ENCODE measurements at regions of chr9 and their contacts with region 1.

Region 1: GRCh38 chr9:17994700-17995430 is 416.0 kb downstream of the SH3GL2 start:
- DNase-seq: no peak
- ATAC-seq: no peak
- H3K4me3 ChIP-seq: no peak overlapping the region
- H3K27ac ChIP-seq: no peak overlapping the region
- H3K4me1 ChIP-seq: no peaks in the 10 kb centered on the region
- H3K27me3 ChIP-seq: no peaks in the 10 kb centered on the region
- CTCF ChIP-seq: no peak
- POLR2A ChIP-seq: no peak

Region 2: DNA sequence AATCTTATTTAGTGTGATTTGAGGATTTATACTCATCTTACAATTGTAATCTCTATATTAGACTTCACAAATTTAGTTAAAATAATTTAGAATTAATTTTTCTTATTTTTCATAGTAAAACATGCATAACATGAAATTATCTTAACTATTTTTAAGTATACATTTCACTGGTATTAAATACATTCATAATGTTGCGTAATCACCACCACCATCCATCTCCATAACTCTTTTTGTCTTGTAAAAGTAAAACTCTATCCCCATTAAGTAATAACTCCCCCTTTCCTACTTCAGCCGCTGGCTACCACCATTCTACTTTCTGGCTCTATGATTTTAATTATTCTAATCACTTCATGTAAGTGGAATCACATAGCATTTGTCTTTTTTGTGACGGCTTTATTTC is 222.6 kb before region 1 on chr9:
- in situ Hi-C with region 1: no loop called
- intact Hi-C with region 1: no loop called
- DNase-seq: no peak
- ATAC-seq: no peak
- H3K4me3 ChIP-seq: no peak overlapping the region
- H3K27ac ChIP-seq: no peak overlapping the region
- H3K4me1 ChIP-seq: no peaks in the 10 kb centered on the region
- H3K27me3 ChIP-seq: no peaks in the 10 kb centered on the region
- CTCF ChIP-seq: no peak
- POLR2A ChIP-seq: no peak

Region 3: DNA sequence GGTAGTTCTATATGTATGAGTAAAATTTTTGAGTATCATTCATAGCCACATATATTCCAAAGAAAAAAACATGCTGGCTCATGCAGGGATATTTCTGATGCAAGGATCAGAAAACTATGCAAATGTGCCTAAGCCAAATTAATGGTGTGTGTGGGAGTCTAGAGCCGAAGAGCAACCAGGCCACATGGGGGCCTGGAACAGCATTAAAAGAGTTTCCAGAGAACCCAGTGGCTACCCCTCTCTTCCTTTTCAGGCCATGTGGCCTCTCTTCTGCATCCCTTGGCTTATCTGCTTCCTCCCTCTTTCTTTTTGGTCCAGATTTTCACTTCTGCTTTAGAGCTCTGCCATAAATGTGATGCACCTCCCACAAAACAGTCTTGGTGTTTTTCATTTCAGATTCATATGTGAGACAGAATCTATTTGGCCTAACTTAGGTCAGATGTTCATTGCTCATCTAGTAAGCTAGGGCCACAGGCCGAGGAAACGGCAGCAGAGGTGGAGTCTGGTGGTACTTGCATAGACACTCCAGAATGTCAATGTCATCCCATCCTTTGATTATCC is 116.0 kb before region 1 on chr9:
- in situ Hi-C with region 1: loop called in 1 of 4 experiments (anchors 25 kb)
- intact Hi-C with region 1: no loop called
- DNase-seq: no peak
- ATAC-seq: no peak
- H3K4me3 ChIP-seq: no peak overlapping the region
- H3K27ac ChIP-seq: no peak overlapping the region
- H3K4me1 ChIP-seq: no peaks in the 10 kb centered on the region
- H3K27me3 ChIP-seq: no peaks in the 10 kb centered on the region
- CTCF ChIP-seq: no peak
- POLR2A ChIP-seq: no peak

Region 4: DNA sequence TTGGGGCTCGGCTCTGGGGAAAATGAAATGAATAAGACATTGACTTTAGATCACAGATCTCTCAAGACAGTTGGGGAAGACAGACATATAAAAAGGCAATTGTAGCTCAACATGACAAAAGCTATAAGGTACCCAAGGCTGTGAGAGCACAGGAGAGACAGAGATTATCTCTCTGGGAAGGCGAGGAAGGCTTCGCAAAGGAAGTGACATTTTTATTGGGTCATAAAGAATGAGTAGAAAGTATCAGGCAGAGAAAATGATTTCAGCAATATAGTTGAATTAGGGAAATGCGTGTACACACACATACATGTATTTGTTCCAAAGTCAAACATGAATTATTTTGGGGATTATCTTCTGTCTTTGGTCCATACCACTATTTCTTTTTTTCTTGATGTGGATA is 97.3 kb after region 1 on chr9:
- in situ Hi-C with region 1: no loop called
- intact Hi-C with region 1: no loop called
- DNase-seq: no peak
- ATAC-seq: no peak
- H3K4me3 ChIP-seq: no peak overlapping the region
- H3K27ac ChIP-seq: no peak overlapping the region
- H3K4me1 ChIP-seq: no peaks in the 10 kb centered on the region
- H3K27me3 ChIP-seq: no peaks in the 10 kb centered on the region
- CTCF ChIP-seq: no peak
- POLR2A ChIP-seq: no peak

Measured in gastrocnemius medialis (tissue), 4 donors.